GM10248 (cell line): ENCODE measurements at regions of chrX and their contacts with region 1.

Region 1: DNA sequence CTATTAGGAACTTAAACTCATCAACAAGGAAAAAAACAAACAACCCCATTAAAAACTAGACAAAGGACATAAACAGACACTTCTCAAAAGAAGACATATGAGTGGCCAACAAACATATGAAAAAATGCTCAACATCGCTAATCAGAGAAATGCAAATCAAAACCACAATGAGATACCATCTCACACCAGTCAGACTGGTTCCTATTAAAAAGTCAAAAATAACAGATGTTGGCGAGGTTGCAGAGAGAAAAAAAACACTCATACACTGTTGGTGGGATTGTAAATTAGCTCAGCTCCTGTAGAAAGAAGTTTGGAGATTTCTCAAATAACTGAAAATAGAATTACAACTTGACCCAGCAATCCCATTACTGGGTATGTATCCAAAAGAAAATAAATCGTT is 28.7 kb downstream of the APLN start:
- DNase-seq: no peak
- CTCF ChIP-seq: no peak

Region 2: DNA sequence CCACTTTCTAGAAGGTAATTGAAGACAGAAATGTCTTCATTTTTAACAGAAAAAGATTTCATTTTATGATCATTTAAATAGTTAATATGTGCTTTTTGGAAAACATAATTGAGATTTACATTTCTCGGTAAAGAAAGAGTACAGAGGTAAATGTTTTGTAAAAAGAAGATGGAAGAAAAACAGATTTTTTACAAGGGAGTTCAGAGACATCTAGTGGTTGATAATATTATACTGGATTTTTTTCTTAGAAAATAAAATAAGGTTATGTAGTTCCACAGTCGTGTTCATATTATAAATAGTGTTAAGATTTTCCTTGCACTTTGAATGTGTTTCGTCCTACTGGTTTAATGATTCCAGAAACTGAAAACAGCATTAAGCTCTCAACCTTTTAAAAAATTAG is 163.3 kb before region 1 on chrX:
- CTCF ChIA-PET with region 1: no interaction called
- POLR2A ChIA-PET with region 1: no interaction called
- DNase-seq: no peak
- CTCF ChIP-seq: no peak

Region 3: GRCh38 chrX:129637217-129638109 is 11.4 kb after region 1 on chrX:
- CTCF ChIA-PET with region 1: interaction called, 21 read pairs
- POLR2A ChIA-PET with region 1: no interaction called
- DNase-seq: peak; percentile 76
- CTCF ChIP-seq: peak; percentile 79